BJ (cell line): ENCODE measurements at regions of chr12 and their contacts with region 1.

Region 1: DNA sequence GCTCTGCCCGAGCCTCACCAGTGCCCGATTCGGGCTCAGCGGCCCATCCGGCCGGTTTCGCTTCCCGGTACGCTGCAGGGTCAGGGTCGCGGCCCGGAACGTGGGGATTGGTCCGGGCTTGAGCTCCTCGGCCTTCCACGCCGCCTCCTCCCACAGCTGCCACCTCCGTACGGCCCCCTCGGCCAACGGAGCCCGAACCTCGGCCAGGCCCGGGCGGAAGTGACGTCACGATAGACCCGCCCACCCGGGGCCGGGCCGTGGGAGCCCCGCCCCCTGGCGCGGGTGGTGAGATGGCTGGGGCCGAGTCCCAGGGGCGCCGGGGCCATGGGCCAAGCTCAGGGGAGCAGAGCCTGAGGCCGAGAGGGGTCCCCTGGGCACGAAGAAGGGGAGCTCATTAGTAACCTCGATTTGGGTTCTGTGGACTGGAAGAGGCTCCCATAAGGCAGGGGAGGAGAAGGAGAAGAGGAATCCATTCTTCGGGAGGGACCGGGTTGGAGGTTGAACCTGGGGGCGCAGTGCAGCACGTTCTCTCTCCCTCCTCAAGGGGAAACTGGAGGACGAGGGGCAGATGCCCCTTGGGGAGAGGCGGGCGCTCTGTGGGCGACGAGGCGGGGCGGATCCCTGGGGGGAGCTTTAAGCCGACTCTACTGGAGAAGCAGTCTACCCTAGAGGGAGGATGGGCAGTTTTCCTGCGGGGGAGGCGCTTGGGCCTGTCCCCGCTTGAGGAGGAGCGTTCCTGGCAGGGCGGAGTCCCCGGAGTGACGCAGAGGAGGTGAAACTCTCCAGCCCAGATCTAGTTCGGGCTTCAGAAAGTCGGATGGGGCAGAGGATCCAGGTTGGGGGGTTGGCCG is at the start of gene MLF2:
- DNase-seq: peak; percentile 93
- H3K4me3 ChIP-seq: peak within 1 kb of the TSS; percentile 98
- H3K27me3 ChIP-seq: no peaks in the 10 kb centered on the region
- CTCF ChIP-seq: no peak
- polyA plus RNA-seq, gene MLF2: 287 and 345 TPM in 2 replicates

Region 2: GRCh38 chr12:6613776-6614512 is 139.2 kb before region 1 on chr12:
- CTCF ChIA-PET with region 1: interaction called, 10 read pairs
- POLR2A ChIA-PET with region 1: interaction called, 3 read pairs
- DNase-seq: peak; percentile 87
- H3K4me3 ChIP-seq: no peak overlapping the region
- H3K27me3 ChIP-seq: no peaks in the 10 kb centered on the region
- CTCF ChIP-seq: peak; percentile 22; the same call in 1 of the 2 replicates

Region 3: GRCh38 chr12:6735448-6736191 is 17.5 kb before region 1 on chr12:
- CTCF ChIA-PET with region 1: interaction called, 24 read pairs
- POLR2A ChIA-PET with region 1: no interaction called
- DNase-seq: no peak
- H3K4me3 ChIP-seq: no peak overlapping the region
- H3K27me3 ChIP-seq: no peaks in the 10 kb centered on the region
- CTCF ChIP-seq: peak; percentile 76

Region 4: GRCh38 chr12:6778574-6779550 is 25.7 kb after region 1 on chr12:
- CTCF ChIA-PET with region 1: interaction called, 222 read pairs
- POLR2A ChIA-PET with region 1: no interaction called
- DNase-seq: peak; percentile 53
- H3K4me3 ChIP-seq: peak overlapping the region; percentile 36
- H3K27me3 ChIP-seq: no peaks in the 10 kb centered on the region
- CTCF ChIP-seq: peak; percentile 95

Region 5: DNA sequence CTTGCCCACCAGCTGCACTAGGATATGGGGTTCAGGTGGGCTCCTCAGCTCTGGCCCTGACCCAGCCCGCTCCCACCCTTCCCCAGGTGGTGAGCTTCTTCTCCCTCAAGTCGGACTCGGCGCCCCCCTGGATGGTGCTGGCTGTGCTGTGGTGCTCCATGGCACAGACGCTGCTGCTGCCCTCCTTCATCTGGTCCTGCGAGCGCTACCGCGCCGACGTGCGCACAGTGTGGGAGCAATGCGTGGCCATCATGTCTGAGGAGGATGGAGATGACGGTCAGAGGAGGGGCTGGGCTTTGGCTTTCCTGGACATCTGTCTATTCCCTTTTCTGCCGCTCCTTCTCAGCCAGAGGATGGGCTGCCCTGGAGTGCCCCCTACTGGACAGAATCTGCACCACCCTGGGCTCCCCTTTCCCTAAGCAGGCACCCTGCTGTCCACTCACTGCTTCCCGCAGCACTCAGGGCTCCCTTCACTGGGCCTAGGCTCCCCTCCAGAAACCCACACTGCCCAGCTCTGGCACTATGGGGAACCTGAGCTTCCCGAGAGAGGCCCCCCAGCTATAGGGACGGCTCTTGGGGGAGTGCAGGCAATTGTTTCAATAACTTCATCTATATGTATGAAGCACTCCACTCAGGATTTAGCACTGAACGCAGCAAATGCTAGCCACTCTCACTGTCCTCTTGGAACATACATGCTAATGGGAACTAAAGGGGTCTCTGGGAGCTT is 72.4 kb after region 1 on chr12:
- CTCF ChIA-PET with region 1: interaction called, 92 read pairs
- POLR2A ChIA-PET with region 1: no interaction called
- DNase-seq: no peak
- H3K4me3 ChIP-seq: peak overlapping the region; percentile 32
- H3K27me3 ChIP-seq: peaks cover 3% of the 10 kb centered on the region; the same call in 1 of the 2 replicates
- CTCF ChIP-seq: peak; percentile 97

Region 6: DNA sequence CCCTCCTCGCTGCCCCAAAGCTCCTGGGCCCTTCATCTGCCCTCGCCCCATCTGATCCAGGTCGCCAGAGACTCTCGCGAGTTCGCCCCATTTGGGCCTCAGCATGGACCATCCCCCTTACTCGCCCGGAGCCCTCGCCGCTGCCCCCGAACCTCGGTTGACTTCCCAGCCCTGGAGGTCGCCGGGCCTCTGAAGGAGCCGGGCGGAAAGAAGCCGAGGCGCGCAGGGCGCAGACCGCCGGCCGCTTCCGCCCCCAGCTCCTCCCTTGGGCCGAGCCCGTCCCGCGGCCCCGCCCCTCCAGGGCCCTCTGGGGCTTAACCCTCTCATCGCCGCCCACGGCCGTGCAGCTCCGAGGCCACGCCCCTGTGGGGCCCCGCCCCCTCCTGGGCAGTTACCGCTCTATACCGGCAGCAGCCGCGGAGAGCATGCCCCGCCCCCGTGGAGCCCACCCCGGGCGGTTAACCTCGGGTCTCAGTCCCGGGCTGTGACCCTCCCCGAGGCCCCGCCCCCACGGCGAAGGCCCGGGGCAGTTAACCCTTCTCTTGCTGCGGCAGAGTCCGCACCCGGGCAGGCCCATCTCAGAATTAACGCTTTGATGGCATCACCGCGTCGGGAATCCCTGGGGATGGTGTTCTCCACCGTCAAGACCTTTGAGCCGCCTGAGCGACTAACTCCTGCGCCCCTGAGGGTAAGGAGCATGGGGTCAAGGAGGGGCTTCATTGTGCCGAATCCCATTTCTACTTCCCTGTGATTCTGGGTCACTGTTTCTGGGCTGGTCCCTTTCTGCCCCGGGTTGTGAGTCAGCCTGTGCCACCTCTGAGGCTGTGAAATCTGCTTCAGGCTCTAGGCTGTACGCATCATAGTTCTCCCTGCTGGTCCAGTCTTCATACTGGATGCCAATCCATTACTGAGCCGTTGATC is 120.2 kb after region 1 on chr12 and contains the start of gene SPSB2:
- CTCF ChIA-PET with region 1: interaction called, 12 read pairs
- POLR2A ChIA-PET with region 1: no interaction called
- DNase-seq: no peak
- H3K4me3 ChIP-seq: peak within 1 kb of the TSS; percentile 65
- H3K27me3 ChIP-seq: no peaks in the 10 kb centered on the region
- CTCF ChIP-seq: no peak
- polyA plus RNA-seq, gene SPSB2: 5.0 and 7.3 TPM in 2 replicates